Caco-2 (cell line): ENCODE measurements at regions of chr21 and their contacts with region 1.

Region 1: DNA sequence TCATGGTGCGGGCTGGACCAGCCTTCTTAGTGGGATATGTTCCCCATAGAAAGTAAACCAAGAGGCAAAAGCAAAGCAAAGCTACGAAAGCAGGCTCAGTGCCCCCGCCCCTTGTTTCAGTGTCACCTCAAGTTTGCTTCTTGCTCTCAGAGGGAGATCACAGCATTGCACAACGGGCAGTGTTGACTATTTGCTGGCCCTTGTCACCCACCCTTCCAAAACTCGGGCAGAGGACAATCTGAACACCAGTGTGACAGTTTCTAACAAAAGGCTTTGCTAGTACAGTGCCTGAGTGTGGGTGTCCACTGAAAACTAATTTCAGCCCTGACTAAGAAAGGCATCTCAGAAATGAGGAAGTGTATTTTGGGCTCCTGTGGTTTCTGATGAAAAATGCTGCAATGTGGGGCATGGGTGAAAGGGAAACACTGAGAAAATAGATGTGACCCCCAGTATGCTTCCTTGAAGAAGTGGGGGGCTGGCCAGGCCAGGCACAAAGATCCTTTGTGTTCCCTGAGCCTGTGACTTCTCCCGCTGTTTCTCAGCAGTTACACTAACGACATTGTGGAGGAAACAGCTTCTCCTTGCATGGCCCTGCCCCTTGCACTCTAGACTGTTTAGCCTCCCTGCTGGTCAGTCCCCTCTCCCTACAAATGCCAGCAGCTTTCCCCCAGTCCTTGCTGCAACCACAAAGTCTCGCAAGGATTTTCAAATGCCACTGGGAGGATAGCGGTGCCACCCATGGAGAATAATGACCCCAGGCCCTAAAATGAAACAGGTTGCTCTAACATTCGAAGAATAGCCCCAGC is 33.3 kb upstream of the KCNE1 start:
- DNase-seq: peak; percentile 50 to 56
- H3K4me3 ChIP-seq: no peak overlapping the region
- H3K4me3 Mint-ChIP-seq: peak overlapping the region; percentile 43
- H3K27ac Mint-ChIP-seq: peak overlapping the region; percentile 92
- H3K4me1 ChIP-seq: peaks cover 28% of the 10 kb centered on the region
- H3K4me1 Mint-ChIP-seq: peaks cover 13% of the 10 kb centered on the region
- H3K27me3 ChIP-seq: no peaks in the 10 kb centered on the region
- H3K27me3 Mint-ChIP-seq: no peaks in the 10 kb centered on the region
- CTCF ChIP-seq: no peak

Region 2: GRCh38 chr21:34517491-34518245 is 27.6 kb before region 1 on chr21:
- CTCF ChIA-PET with region 1: interaction called, 11 read pairs
- POLR2A ChIA-PET with region 1: no interaction called
- intact Hi-C with region 1: no loop called
- DNase-seq: peak in 1 of 2 experiments; percentile 35
- H3K4me3 ChIP-seq: no peak overlapping the region
- H3K4me3 Mint-ChIP-seq: no peak overlapping the region
- H3K27ac Mint-ChIP-seq: peak overlapping the region; percentile 42
- H3K4me1 ChIP-seq: peaks cover 8% of the 10 kb centered on the region
- H3K4me1 Mint-ChIP-seq: peaks cover under 1% of the 10 kb centered on the region
- H3K27me3 ChIP-seq: no peaks in the 10 kb centered on the region
- H3K27me3 Mint-ChIP-seq: no peaks in the 10 kb centered on the region
- CTCF ChIP-seq: peak; percentile 42 to 53

Region 3: GRCh38 chr21:34526618-34527290 is 18.5 kb before region 1 on chr21:
- CTCF ChIA-PET with region 1: interaction called, 10 read pairs
- POLR2A ChIA-PET with region 1: interaction called, 5 read pairs
- intact Hi-C with region 1: loop called (anchors 2 kb)
- DNase-seq: peak; percentile 91 to 96
- H3K4me3 ChIP-seq: peak overlapping the region; percentile 29
- H3K4me3 Mint-ChIP-seq: peak overlapping the region; percentile 78
- H3K27ac Mint-ChIP-seq: peak overlapping the region; percentile 91
- H3K4me1 ChIP-seq: peaks cover 33% of the 10 kb centered on the region
- H3K4me1 Mint-ChIP-seq: peaks cover 18% of the 10 kb centered on the region
- H3K27me3 ChIP-seq: no peaks in the 10 kb centered on the region
- H3K27me3 Mint-ChIP-seq: no peaks in the 10 kb centered on the region
- CTCF ChIP-seq: no peak

Region 4: GRCh38 chr21:34619841-34620665 is 74.8 kb after region 1 on chr21:
- CTCF ChIA-PET with region 1: no interaction called
- POLR2A ChIA-PET with region 1: no interaction called
- intact Hi-C with region 1: no loop called
- DNase-seq: no peak
- H3K4me3 ChIP-seq: no peak overlapping the region
- H3K4me3 Mint-ChIP-seq: no peak overlapping the region
- H3K27ac Mint-ChIP-seq: no peak overlapping the region
- H3K4me1 ChIP-seq: peaks cover 4% of the 10 kb centered on the region; the same call in 1 of the 2 replicates
- H3K4me1 Mint-ChIP-seq: peaks cover 7% of the 10 kb centered on the region
- H3K27me3 ChIP-seq: no peaks in the 10 kb centered on the region
- H3K27me3 Mint-ChIP-seq: peaks cover 4% of the 10 kb centered on the region
- CTCF ChIP-seq: no peak